ENCODE measurements at regions of chr14 and their contacts with region 1.

Region 1: DNA sequence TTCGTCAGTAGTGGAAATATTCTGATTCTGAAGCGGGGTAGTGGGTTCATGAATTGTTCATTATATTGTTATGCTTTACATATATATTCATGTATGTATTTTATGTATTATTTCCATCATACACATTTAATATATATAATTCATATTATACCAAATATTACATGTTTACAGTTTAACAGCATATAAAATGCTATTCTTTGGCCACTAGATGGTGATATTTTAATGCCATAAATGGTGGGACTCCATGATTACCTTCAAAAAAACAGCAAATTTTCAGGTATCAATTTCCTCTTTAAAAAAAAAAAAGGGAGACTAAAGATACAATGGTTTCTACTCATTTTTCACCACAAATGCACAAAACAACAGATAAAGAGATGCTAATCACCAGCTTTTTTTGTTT is 41.0 kb downstream of the BDKRB1 start:
- DNase-seq: no peak
- H3K4me3 Mint-ChIP-seq: no peak overlapping the region
- H3K27ac Mint-ChIP-seq: no peak overlapping the region
- H3K4me1 Mint-ChIP-seq: no peaks in the 10 kb centered on the region
- H3K27me3 Mint-ChIP-seq: no peaks in the 10 kb centered on the region

Region 2: DNA sequence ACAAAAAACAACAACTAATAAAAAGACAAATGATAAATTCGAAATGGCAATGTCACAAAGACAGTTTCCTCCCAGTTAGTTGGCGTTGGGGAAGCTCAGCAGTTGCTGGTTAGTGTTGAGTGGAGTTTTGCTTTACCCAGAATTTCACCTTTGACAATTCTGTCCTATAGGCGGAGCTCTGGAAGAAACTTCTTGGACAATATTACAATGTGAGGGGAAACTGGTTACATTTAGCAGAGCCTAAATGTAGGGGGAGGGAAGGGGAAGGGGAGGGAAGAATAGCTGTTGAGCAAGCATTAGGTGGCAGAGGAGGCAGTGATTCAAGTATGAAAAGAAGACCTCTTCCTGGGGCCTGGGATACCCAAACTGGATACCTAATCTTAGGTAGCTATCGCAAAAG is 10.4 kb after region 1 on chr14:
- CTCF ChIA-PET with region 1: interaction called, 13 read pairs
- POLR2A ChIA-PET with region 1: no interaction called
- intact Hi-C with region 1: no loop called
- DNase-seq: no peak
- H3K4me3 Mint-ChIP-seq: no peak overlapping the region
- H3K27ac Mint-ChIP-seq: no peak overlapping the region
- H3K4me1 Mint-ChIP-seq: no peaks in the 10 kb centered on the region
- H3K27me3 Mint-ChIP-seq: no peaks in the 10 kb centered on the region

Region 3: GRCh38 chr14:96554315-96554910 is 257.4 kb after region 1 on chr14:
- CTCF ChIA-PET with region 1: no interaction called
- POLR2A ChIA-PET with region 1: no interaction called
- intact Hi-C with region 1: no loop called
- DNase-seq: no peak
- H3K4me3 Mint-ChIP-seq: no peak overlapping the region
- H3K27ac Mint-ChIP-seq: peak overlapping the region; percentile 43
- H3K4me1 Mint-ChIP-seq: peaks cover 9% of the 10 kb centered on the region
- H3K27me3 Mint-ChIP-seq: no peaks in the 10 kb centered on the region